ENCODE measurements at regions of chr17 and their contacts with region 1.

Region 1: DNA sequence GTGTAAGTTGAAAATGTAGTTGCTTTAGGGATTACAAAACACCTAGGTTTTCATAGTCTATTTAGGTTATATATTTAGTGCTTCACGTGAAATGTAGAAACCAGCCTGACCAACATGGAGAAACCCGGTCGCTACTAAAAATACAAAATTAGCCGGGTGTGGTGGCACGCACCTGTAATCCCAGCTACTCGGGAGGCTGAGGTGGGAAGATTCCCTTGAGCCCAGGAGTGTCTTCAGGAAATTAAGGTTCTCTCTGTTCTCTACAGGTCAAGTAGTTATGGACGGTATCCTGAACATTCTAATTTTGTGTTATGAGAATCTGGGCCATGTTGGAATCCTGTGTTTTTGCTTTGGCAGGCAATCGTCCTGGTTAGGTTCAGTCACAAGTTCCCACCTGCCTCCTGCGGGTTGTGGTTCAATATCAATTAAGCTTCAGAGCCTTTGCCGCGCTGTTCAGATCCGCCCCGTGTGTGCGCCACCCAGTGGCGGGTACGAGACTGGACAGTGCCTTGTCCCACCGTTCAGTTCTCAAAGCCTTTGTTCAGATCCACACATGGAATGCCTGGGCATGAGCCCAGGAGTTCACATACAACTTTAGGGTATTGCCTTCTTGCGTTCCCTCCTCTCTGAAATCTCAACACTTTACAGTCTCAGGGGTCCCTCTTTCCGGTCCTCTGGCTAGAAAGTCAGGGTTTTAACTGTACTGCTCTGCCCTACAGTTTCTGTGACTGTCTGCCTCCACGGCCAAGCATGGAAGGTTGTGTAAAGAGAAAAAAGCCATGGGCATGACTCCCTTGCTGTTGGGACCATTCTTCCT is 41.7 kb downstream of the HEATR6 start:
- DNase-seq: peak; percentile 85
- ATAC-seq: peak; percentile 98
- H3K4me3 Mint-ChIP-seq: no peak overlapping the region
- H3K27ac Mint-ChIP-seq: no peak overlapping the region
- H3K4me1 Mint-ChIP-seq: peaks cover 8% of the 10 kb centered on the region
- H3K27me3 Mint-ChIP-seq: peaks cover 14% of the 10 kb centered on the region

Region 2: GRCh38 chr17:59311130-59311920 is 725.7 kb before region 1 on chr17:
- CTCF ChIA-PET with region 1: interaction called, 4 read pairs
- POLR2A ChIA-PET with region 1: no interaction called
- intact Hi-C with region 1: loop called in 1 of 2 experiments (anchors 5 kb)
- DNase-seq: peak; percentile 48
- ATAC-seq: peak; percentile 99
- H3K4me3 Mint-ChIP-seq: no peak overlapping the region
- H3K27ac Mint-ChIP-seq: no peak overlapping the region
- H3K4me1 Mint-ChIP-seq: peaks cover 2% of the 10 kb centered on the region
- H3K27me3 Mint-ChIP-seq: no peaks in the 10 kb centered on the region

Region 3: DNA sequence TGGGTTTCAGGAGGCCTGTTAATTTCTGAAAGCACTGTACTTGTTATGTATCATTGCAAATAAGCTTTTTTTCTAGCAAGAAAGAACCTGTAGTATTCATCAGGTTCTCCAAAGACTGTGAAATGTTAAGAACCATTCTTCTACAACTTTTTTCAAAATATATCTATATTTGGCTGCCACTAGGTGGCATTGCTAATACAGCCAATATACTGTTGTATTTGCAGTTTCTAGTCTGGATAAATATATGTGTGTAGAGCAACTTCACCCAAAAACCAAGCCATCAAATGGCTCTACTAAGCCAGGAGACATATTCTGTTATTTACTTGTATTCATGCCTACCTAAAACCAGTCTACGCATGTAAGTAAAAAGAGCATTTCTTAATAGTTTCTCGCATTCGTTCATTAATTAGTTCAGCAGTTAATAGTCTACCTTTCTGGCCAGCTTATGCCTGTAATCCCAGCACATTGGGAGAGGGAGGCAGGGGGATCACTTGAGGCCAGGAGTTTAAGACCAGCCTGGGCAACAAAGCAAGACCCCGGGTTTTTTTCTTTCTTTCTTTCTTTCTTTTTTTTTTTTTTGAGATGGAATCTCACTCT is 290.1 kb before region 1 on chr17:
- CTCF ChIA-PET with region 1: interaction called, 16 read pairs
- POLR2A ChIA-PET with region 1: no interaction called
- intact Hi-C with region 1: loop called in 1 of 2 experiments (anchors 5 kb)
- DNase-seq: no peak
- ATAC-seq: peak; percentile 64
- H3K4me3 Mint-ChIP-seq: no peak overlapping the region
- H3K27ac Mint-ChIP-seq: no peak overlapping the region
- H3K4me1 Mint-ChIP-seq: peaks cover 22% of the 10 kb centered on the region
- H3K27me3 Mint-ChIP-seq: no peaks in the 10 kb centered on the region

Region 4: GRCh38 chr17:59846394-59847165 is 190.4 kb before region 1 on chr17:
- CTCF ChIA-PET with region 1: interaction called, 3 read pairs
- POLR2A ChIA-PET with region 1: no interaction called
- intact Hi-C with region 1: loop called in 1 of 2 experiments (anchors 10 kb)
- DNase-seq: no peak
- ATAC-seq: peak; percentile 21
- H3K4me3 Mint-ChIP-seq: peak overlapping the region; percentile 46
- H3K27ac Mint-ChIP-seq: peak overlapping the region; percentile 87
- H3K4me1 Mint-ChIP-seq: peaks cover 73% of the 10 kb centered on the region
- H3K27me3 Mint-ChIP-seq: no peaks in the 10 kb centered on the region

Region 5: GRCh38 chr17:59950049-59950448 is 87.0 kb before region 1 on chr17:
- CTCF ChIA-PET with region 1: no interaction called
- POLR2A ChIA-PET with region 1: no interaction called
- intact Hi-C with region 1: loop called in 1 of 2 experiments (anchors 10 kb)
- DNase-seq: no peak
- ATAC-seq: no peak
- H3K4me3 Mint-ChIP-seq: no peak overlapping the region
- H3K27ac Mint-ChIP-seq: no peak overlapping the region
- H3K4me1 Mint-ChIP-seq: peaks cover 30% of the 10 kb centered on the region
- H3K27me3 Mint-ChIP-seq: no peaks in the 10 kb centered on the region

Region 6: DNA sequence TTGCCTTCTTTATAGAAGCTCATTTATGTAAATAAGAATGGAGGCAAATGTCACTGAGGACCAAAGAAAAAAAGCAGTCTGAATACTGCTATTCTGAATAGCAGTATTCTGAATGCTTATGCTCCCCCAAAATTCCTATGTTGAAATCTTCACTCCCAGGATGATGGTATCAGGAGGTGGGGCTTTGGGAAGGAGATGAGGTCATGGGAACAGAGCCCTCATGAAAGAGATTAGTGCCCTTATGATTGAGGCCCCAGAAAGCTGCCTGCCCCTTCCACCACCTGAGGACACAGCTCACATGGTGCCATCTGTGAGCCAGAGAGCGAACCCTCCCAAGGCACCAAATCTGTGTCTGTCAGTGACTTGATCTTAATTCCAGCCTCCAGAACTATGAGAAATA is 12.9 kb after region 1 on chr17:
- CTCF ChIA-PET with region 1: interaction called, 55 read pairs
- POLR2A ChIA-PET with region 1: no interaction called
- intact Hi-C with region 1: no loop called
- DNase-seq: no peak
- ATAC-seq: no peak
- H3K4me3 Mint-ChIP-seq: no peak overlapping the region
- H3K27ac Mint-ChIP-seq: no peak overlapping the region
- H3K4me1 Mint-ChIP-seq: no peaks in the 10 kb centered on the region
- H3K27me3 Mint-ChIP-seq: no peaks in the 10 kb centered on the region

Region 7: GRCh38 chr17:60284709-60285108 is 247.7 kb after region 1 on chr17:
- CTCF ChIA-PET with region 1: no interaction called
- POLR2A ChIA-PET with region 1: no interaction called
- intact Hi-C with region 1: no loop called
- DNase-seq: no peak
- ATAC-seq: no peak
- H3K4me3 Mint-ChIP-seq: no peak overlapping the region
- H3K27ac Mint-ChIP-seq: no peak overlapping the region
- H3K4me1 Mint-ChIP-seq: no peaks in the 10 kb centered on the region
- H3K27me3 Mint-ChIP-seq: no peaks in the 10 kb centered on the region

Measured in activated CD4-positive, alpha-beta T cell treated with anti-CD3 and anti-CD28 coated beads for 36 hours (primary cell).